BJ (cell line): ENCODE measurements at regions of chr3 and their contacts with region 1.

Region 1: GRCh38 chr3:14947886-14948555 is 638 bp downstream of the NR2C2 start:
- DNase-seq: peak; percentile 59
- H3K4me3 ChIP-seq: peak overlapping the region; percentile 93
- H3K27me3 ChIP-seq: no peaks in the 10 kb centered on the region
- CTCF ChIP-seq: no peak

Region 2: GRCh38 chr3:13479581-13480339 is 1468.3 kb before region 1 on chr3 and contains the start of gene HDAC11:
- CTCF ChIA-PET with region 1: no interaction called
- POLR2A ChIA-PET with region 1: interaction called, 14 read pairs
- DNase-seq: peak; percentile 78
- H3K4me3 ChIP-seq: peak within 1 kb of the TSS; percentile 68
- H3K27me3 ChIP-seq: 0 out of 2 replicates have a peak, but pooled peaks cover under 1% of the 10 kb centered on the region
- CTCF ChIP-seq: 0 out of 2 replicates have a peak, but pooled peaks have one; percentile 14
- polyA plus RNA-seq, gene HDAC11: 9.8 and 16.0 TPM in 2 replicates

Region 3: DNA sequence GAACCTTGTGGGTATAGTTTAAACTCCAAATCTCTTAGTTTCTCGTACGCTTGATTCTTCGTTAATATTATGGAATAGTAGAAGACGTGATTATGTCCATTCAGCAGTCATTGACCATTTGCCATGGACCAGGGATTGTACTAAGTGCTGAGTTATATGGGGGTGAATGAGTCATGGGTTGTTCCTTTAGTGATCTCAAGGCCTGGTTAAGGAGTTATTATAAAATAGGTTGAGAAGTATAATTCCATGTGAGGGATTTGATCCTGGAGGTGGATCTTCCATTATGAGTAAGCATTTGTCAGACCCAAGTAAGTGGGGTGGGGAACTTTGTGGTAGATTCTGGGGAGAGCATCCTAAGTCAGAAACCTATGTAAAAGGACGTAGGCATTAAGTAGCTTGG is 14.7 kb after region 1 on chr3:
- CTCF ChIA-PET with region 1: no interaction called
- POLR2A ChIA-PET with region 1: no interaction called
- DNase-seq: no peak
- H3K4me3 ChIP-seq: no peak overlapping the region
- H3K27me3 ChIP-seq: no peaks in the 10 kb centered on the region
- CTCF ChIP-seq: no peak